Mammary epithelial cell (primary cell): ENCODE measurements at regions of chr16 and their contacts with region 1.

Region 1: DNA sequence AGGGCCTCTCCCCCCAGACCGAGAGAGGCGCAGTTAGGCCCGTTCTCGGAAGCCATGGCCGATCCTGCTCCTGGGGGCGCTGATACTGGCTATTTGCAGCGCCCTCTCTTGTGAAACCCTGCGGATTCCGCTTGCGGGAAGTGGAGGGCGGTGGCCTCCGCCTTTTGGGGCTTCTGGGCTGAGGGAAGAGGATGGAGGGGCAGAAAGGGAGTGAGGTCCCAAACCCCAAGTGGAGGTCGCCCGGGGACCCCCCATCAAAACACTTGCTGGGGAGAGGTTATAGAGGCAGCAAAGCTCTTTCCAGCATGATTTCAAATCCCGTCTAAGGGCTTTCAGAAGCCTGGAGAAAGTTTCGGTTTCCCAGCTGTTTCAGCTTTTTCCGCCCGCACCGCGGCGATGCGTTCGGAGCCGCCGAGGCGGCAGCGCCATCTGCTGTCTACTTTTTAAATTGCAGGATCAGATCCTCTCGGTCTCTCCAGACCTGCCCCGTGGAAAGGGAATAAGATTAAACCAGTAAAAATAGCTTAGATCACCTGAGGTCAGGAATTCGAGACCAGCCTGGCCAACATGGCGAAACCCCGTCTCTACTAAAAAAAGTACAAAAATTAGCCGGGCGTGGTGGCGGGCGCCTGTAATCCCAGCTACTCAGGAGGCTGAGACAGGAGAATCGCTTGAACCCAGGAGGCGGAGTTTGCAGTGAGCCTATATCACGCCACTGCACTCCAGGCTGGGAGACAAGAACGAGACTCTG is 15.8 kb downstream of the SNX20 start:
- DNase-seq: peak; percentile 53
- H3K4me3 ChIP-seq: peak overlapping the region; percentile 22 to 30 (median 23)
- H3K27ac ChIP-seq: no peak overlapping the region
- H3K4me1 ChIP-seq: peaks cover 3% of the 10 kb centered on the region
- H3K27me3 ChIP-seq: no peaks in the 10 kb centered on the region
- CTCF ChIP-seq: peak; percentile 75 to 85

Region 2: DNA sequence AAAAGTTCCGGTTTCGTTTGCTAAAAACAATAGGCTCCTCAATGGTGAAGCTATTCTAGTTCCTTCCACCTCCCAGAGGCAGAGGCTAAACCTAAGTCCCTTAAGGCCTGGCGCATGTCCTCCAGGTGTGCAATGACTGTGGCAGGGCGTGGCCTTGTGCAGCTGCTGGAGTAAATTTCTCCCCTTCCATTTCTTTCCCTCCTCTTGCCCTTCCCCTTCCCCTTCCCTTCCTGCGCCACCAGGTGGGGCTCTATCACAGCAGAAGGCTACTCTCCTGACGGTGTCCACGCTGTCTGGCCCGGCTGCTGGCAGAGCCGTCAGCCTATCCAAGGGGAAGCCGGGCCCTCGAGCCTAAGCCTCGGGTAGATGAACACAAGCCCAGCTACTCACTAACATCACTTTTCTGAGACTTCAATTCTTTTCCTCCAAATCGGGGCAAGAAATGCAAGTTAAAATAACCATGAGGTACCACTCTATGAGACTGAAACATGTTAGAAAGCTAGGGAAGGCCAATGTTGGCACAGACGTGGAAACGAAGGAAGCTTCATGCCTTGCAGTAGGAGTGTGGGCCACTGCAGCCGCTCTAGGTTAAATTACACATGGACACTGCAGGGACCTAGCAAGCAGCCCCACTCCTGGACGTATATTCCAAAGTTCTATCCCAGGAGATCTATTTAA is 1257.3 kb before region 1 on chr16:
- CTCF ChIA-PET with region 1: no interaction called
- dilution Hi-C with region 1: no loop called
- in situ Hi-C with region 1: no loop called
- intact Hi-C with region 1: loop called (anchors 10 kb)
- DNase-seq: peak; percentile 67
- H3K4me3 ChIP-seq: no peak overlapping the region
- H3K27ac ChIP-seq: no peak overlapping the region
- H3K4me1 ChIP-seq: no peaks in the 10 kb centered on the region
- H3K27me3 ChIP-seq: no peaks in the 10 kb centered on the region
- CTCF ChIP-seq: peak; percentile 63 to 90

Region 3: GRCh38 chr16:50368410-50369132 is 296.7 kb before region 1 on chr16 and contains the start of gene BRD7:
- CTCF ChIA-PET with region 1: interaction called, 7 read pairs
- dilution Hi-C with region 1: no loop called
- in situ Hi-C with region 1: loop called (anchors 10 to 25 kb)
- intact Hi-C with region 1: no loop called
- DNase-seq: peak; percentile 42
- H3K4me3 ChIP-seq: peak within 1 kb of the TSS; percentile 60 to 83 (median 76)
- H3K27ac ChIP-seq: peak within 1 kb of the TSS; percentile 75
- H3K4me1 ChIP-seq: peaks cover 17% of the 10 kb centered on the region
- H3K27me3 ChIP-seq: no peaks in the 10 kb centered on the region
- CTCF ChIP-seq: peak in 1 of 2 donors; percentile 39
- total RNA-seq, gene BRD7: 22.3 to 69.7 TPM

Region 4: DNA sequence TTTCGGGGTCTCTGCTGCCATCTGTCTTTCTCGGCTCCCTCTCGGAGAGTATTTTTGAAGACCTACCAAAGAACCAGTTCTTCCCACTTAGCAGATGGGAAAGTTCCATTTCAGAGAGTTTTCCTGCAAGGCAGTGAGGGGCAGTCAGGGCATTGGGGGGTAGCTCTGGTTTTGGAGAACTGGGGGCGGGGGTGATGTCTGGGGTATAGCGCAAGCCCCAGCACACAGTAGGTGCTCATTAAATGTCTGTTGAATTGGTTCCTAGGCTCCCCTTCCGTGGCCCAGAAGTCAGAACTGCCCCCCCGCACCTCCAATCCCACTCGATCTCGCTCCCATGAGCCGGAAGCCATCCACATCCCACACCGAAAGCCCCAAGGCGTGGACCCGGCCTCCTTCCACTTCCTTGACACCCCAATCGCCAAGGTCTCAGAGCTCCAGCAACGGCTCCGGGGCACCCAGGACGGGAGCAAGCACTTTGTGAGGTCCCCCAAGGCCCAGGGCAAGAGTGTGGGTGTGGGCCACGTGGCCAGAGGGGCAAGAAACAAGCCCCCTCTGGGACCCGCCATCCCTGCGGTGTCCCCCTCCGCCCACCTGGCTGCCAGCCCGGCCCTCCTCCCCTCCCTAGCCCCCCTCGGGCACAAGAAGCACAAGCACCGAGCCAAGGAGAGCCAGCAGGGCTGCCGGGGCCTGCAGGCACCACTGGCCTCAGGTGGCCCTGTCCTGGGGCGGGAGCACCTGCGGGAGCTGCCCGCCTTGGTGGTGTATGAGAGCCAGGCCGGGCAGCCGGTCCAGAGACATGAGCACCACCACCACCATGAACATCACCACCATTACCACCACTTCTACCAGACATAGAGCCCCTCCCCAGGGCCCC is 32.1 kb before region 1 on chr16:
- CTCF ChIA-PET with region 1: interaction called, 22 read pairs
- dilution Hi-C with region 1: no loop called
- in situ Hi-C with region 1: no loop called
- intact Hi-C with region 1: no loop called
- DNase-seq: no peak
- H3K4me3 ChIP-seq: no peak overlapping the region
- H3K27ac ChIP-seq: no peak overlapping the region
- H3K4me1 ChIP-seq: no peaks in the 10 kb centered on the region
- H3K27me3 ChIP-seq: no peaks in the 10 kb centered on the region
- CTCF ChIP-seq: no peak

Region 5: DNA sequence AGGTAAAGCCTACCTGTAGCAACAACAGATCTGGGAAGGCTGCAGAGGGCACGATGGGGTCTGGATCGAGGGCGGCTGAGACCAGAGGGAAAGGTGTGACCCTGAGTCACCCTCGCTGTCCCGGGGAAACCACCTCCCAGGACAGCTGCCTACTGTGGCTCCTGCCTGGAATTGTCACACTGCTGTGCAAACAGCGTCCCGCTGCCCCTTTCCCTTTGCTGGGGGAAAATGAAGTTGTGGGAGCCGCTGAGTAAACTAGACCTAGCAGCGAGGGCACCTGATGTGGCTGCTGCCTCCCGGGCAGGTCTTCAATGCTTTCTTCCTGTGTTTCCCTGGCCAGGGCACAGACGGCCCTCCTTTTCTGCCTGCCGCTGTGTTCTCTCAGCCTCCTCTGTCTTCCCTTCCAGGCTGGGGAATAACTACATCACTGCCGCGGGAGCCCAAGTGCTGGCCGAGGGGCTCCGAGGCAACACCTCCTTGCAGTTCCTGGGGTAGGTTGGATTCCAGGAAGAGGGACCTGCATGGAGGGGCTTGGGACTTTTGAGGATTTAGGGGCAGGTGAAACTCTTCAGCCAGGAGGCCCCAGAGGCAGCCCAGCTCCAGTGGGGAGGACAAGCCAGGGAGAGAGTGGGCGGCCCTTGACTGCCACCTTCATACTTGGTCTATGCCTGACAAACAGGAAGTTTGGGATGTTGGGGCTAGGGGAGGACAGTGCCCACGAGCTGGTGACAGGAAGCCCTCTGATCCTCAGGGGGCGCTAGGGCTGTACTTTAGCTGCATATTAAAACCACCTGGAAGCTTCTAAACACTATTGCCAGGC is 54.4 kb after region 1 on chr16:
- CTCF ChIA-PET with region 1: no interaction called
- dilution Hi-C with region 1: no loop called
- in situ Hi-C with region 1: no loop called
- intact Hi-C with region 1: no loop called
- DNase-seq: no peak
- H3K4me3 ChIP-seq: no peak overlapping the region
- H3K27ac ChIP-seq: no peak overlapping the region
- H3K4me1 ChIP-seq: peaks cover 10% of the 10 kb centered on the region
- H3K27me3 ChIP-seq: no peaks in the 10 kb centered on the region
- CTCF ChIP-seq: no peak

Region 6: GRCh38 chr16:50806099-50807062 is 141.1 kb after region 1 on chr16:
- CTCF ChIA-PET with region 1: interaction called, 11 read pairs
- dilution Hi-C with region 1: no loop called
- in situ Hi-C with region 1: loop called in 1 of 2 experiments (anchors 5 kb)
- intact Hi-C with region 1: loop called (anchors 1 kb)
- DNase-seq: peak; percentile 79
- H3K4me3 ChIP-seq: peak overlapping the region; percentile 40 to 44 (median 43)
- H3K27ac ChIP-seq: no peak overlapping the region
- H3K4me1 ChIP-seq: no peaks in the 10 kb centered on the region
- H3K27me3 ChIP-seq: no peaks in the 10 kb centered on the region
- CTCF ChIP-seq: peak; percentile 81 to 86